Activated T-helper 2 cell treated with anti-CD3 and anti-CD28 coated beads, Interferon-gamma antibody, Interleukin-2, Interleukin-4, amounts not matched to agents 10 μg/mL and 5 μg/mL and 100 μg/mL, durations not matched to agents 14 hours and 24 hours and 36 hours (primary cell): ENCODE measurements at regions of chr11 and their contacts with region 1.

Region 1: GRCh38 chr11:62753736-62754603 is at the start of gene ZBTB3:
- DNase-seq: peak; percentile 98
- H3K4me3 Mint-ChIP-seq: peak within 1 kb of the TSS; percentile 85
- H3K27ac Mint-ChIP-seq: peak within 1 kb of the TSS; percentile 93
- H3K4me1 Mint-ChIP-seq: peaks cover 5% of the 10 kb centered on the region
- H3K27me3 Mint-ChIP-seq: no peaks in the 10 kb centered on the region
- total RNA-seq, gene ZBTB3: 7.3 and 9.3 TPM in 2 replicates

Region 2: DNA sequence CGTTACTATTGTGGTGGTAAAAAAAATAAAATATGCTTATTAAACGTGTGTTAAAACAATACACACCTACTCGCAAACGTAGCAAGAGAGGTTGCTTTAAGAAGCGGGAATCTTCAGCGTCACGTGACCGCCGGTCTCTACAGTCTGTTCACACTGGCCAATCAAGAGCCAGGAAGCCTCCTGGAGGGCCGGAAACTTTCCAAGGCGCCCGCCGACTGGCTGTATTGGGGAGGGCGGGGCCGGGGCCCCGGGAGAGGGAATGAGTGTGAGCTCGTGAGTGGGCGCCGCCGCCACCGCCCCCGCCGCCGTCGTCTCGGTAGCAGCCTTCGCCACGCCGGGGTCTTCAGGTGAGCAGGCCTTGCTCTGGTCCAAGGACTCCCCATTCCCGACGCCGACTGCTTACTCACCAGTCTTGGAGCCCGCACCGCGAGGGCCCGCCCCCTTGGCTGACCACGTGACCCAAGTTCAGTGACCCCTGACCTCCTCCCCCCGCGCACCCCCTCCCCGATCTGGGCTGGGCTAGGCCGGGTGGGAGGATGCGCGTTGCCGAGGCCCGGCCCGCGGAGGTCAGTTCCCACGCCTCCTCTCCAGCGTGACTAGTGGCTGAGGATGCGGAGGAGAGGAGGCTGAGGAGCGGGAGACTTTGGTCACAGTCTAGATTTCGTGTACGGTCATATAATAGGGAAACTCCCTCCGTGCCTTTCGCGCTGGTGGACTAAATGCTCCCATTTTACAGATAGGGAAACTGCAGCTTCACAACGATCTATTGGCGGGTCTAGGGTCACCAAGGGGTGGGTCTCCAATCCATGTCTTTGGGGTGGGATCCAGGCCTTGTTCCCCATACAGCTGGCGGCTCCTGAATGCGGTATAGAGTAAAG is 17.4 kb after region 1 on chr11 and contains the start of gene TAF6L:
- intact Hi-C with region 1: loop called (anchors 1 kb)
- DNase-seq: peak; percentile 92
- H3K4me3 Mint-ChIP-seq: peak within 1 kb of the TSS; percentile 88
- H3K27ac Mint-ChIP-seq: peak within 1 kb of the TSS; percentile 92
- H3K4me1 Mint-ChIP-seq: peaks cover 13% of the 10 kb centered on the region
- H3K27me3 Mint-ChIP-seq: no peaks in the 10 kb centered on the region
- total RNA-seq, gene TAF6L: 17.6 and 21.0 TPM in 2 replicates

Region 3: DNA sequence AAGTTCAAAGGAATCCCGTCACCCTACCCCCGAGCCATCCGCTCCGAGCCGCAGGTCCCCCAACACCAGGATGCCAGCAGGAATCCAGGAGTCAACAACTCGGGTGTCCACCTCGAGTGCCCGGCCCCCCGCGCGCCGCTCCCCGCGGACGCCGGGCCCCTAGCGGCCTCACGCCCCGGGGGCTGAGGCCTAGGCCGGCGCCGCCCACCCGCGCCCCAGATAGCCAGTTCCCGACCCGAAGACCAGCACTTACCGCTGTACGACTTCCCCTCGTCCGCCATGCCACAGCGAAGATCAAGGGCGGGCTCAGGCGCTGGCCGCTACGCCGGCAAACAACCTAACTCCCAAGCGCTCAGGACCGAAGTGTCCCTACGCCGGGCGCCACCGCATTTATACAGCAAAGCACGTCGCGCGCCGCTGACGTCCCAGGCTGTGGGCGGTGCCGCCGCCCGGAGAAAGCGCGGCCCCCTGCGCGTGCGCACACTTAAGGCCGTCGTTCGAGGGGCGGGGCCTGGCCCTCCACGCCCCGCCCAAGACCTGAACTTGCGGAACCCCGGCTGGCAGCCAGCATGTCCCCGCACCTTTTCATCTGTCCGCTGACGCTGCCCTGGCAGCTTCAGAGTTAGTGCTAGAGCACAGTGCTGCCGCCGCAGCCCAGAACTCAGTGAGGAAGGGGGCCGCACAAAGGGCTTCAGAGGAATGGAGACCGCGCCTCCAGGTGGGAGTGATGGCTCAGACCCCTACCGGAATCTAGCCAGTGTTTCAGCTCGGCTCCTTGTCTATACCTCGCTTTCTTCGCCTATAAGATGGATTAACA is 51.3 kb after region 1 on chr11 and contains the start of gene NXF1:
- intact Hi-C with region 1: loop called (anchors 2 kb)
- DNase-seq: peak; percentile 95
- H3K4me3 Mint-ChIP-seq: peak within 1 kb of the TSS; percentile 98
- H3K27ac Mint-ChIP-seq: peak within 1 kb of the TSS; percentile 94
- H3K4me1 Mint-ChIP-seq: peaks cover 30% of the 10 kb centered on the region
- H3K27me3 Mint-ChIP-seq: no peaks in the 10 kb centered on the region
- total RNA-seq, gene NXF1: 134 and 139 TPM in 2 replicates

Region 4: DNA sequence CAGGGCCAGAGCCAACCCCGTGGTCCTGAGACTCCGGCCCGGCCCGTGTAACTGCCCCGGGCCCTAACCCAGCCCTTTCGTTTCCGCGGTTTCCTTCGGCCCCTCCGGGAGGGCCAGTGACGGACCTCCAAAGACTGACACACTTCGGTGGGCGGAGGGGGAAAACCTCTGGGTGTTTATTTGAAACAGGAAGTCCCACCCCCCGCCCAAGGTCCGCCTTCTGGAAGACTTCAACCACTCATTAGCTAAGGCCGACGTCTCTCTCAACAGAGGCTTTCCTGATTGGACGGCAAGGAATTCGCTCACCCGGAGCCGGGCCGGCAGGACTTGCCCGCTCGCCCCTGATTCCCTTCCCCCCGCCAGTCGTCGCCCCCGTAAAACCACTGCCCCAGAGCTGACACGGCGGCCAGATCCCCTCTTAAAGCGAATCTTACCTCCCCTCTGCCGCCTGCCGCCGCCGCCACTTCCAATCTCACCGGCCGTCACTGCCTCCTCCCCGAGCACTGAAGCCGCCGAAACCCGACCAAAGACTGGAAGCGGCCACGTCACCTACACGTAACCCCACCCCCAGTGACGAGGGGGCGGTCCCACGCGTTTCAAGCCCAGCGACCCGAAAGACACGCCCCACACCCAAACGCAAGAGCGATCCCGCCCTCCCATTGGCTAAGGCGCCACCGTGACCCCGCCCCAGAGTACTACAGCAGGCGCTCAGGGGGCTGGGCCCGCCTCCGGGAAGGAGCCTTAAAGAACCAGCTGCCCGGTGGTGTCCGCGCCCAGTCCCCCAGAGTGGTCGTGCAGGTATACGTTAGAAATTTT is 77.8 kb after region 1 on chr11 and contains the start of gene STX5:
- intact Hi-C with region 1: loop called (anchors 1 kb)
- DNase-seq: peak; percentile 99
- H3K4me3 Mint-ChIP-seq: peak within 1 kb of the TSS; percentile 94
- H3K27ac Mint-ChIP-seq: peak within 1 kb of the TSS; percentile 99
- H3K4me1 Mint-ChIP-seq: peaks cover 23% of the 10 kb centered on the region
- H3K27me3 Mint-ChIP-seq: no peaks in the 10 kb centered on the region
- total RNA-seq, gene STX5: 37.4 and 41.9 TPM in 2 replicates